ENCODE measurements at regions of chr22 and their contacts with region 1.

Region 1: GRCh38 chr22:17785185-17786184 is 11.2 kb upstream of the BID start:
- DNase-seq: peak; percentile 55
- H3K4me3 Mint-ChIP-seq: no peak overlapping the region
- H3K27ac Mint-ChIP-seq: no peak overlapping the region
- H3K4me1 Mint-ChIP-seq: peaks cover 30% of the 10 kb centered on the region
- H3K27me3 Mint-ChIP-seq: no peaks in the 10 kb centered on the region
- CTCF ChIP-seq: peak; percentile 46

Region 2: GRCh38 chr22:17554814-17555213 is 230.7 kb before region 1 on chr22:
- CTCF ChIA-PET with region 1: interaction called, 9 read pairs
- POLR2A ChIA-PET with region 1: no interaction called
- intact Hi-C with region 1: loop called (anchors 5 kb)
- DNase-seq: no peak
- H3K4me3 Mint-ChIP-seq: no peak overlapping the region
- H3K27ac Mint-ChIP-seq: no peak overlapping the region
- H3K4me1 Mint-ChIP-seq: no peaks in the 10 kb centered on the region
- H3K27me3 Mint-ChIP-seq: no peaks in the 10 kb centered on the region
- CTCF ChIP-seq: no peak

Region 3: DNA sequence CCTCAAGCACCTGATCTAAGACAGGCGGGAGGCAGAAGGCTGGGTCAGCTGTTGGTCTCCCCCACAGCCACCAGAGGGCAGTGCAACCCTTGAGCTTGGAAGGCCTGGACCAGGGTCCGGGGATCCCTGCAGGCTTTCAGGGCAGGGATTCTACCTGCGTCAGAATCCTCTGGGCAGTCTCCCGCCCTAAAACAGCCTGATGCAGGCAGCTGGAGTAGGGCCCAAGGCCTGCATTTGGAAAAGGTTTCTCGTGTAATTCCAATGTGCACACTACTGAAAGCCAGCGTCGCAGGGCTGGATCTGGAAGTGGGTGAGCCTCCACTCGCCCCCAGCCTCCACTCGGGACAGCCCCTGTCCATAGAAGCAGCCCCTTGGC is 43.0 kb before region 1 on chr22:
- CTCF ChIA-PET with region 1: interaction called, 36 read pairs
- POLR2A ChIA-PET with region 1: interaction called, 3 read pairs
- intact Hi-C with region 1: loop called (anchors 2 kb)
- DNase-seq: peak; percentile 76
- H3K4me3 Mint-ChIP-seq: no peak overlapping the region
- H3K27ac Mint-ChIP-seq: no peak overlapping the region
- H3K4me1 Mint-ChIP-seq: no peaks in the 10 kb centered on the region
- H3K27me3 Mint-ChIP-seq: no peaks in the 10 kb centered on the region
- CTCF ChIP-seq: peak; percentile 82

Region 4: GRCh38 chr22:17773606-17774205 is 11.8 kb before region 1 on chr22:
- CTCF ChIA-PET with region 1: interaction called, 3 read pairs
- POLR2A ChIA-PET with region 1: interaction called, 14 read pairs
- intact Hi-C with region 1: no loop called
- DNase-seq: peak; percentile 47
- H3K4me3 Mint-ChIP-seq: peak overlapping the region; percentile 71
- H3K27ac Mint-ChIP-seq: no peak overlapping the region
- H3K4me1 Mint-ChIP-seq: peaks cover 11% of the 10 kb centered on the region
- H3K27me3 Mint-ChIP-seq: no peaks in the 10 kb centered on the region
- CTCF ChIP-seq: no peak